ENCODE measurements at regions of chr20 and their contacts with region 1.

Region 1: GRCh38 chr20:48051794-48052474 is 266.7 kb upstream of the SULF2 start:
- DNase-seq: no peak
- H3K4me3 ChIP-seq: no peak overlapping the region
- H3K27ac ChIP-seq: peak overlapping the region; percentile 33 to 81 (median 60)
- H3K4me1 ChIP-seq: peaks cover 6 to 42% (median 7%) of the 10 kb centered on the region in 3 donors
- H3K27me3 ChIP-seq: no peaks in the 10 kb centered on the region
- CTCF ChIP-seq: no peak
- POLR2A ChIP-seq: no peak

Region 2: DNA sequence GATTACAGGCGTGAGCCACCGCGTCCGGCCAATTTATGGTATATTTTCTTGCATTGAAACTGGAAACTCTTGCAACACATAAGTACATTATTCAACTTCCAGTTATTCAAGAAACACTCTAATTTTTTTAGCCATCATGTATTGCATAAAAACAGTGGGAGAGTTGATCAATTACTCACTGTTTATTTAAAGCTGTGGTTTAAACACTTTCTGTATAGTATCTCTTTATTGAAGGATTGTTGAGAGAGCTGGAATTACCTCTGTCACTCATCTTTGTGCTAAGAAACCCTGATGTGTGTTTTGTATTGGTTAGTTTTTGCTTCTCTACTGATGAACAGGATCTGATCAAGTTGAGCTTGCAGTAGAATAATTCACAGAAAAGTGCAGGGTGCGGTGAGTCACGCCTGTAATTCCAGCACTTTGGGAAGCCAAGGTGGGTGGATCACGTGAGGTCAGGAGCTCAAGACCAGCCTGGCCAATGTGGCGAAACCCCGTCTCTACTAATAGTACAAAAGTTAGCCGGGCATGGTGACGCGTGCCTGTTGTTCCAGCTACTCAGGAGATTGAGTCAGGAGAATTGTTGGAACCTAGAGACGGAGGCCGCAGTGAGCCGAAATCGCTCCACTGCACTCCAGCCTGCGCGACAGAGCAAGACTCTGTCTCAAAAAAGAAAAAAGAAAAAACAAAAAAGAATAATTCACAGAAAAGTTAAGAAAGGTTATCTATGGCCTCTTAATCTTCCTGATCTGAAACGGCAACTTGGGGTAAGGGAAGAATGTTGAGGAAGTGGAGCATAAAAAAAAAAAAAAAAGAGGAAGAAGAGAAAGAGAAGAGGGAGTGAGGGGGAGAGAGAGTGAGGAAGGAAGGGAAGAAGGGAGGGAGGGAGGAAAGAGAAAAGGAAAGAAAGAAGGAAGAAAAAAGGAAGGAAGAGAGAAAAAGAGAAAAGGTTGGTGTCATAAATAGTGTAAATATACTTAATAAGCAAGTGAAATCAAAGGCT is 619.4 kb before region 1 on chr20:
- intact Hi-C with region 1: no loop called
- DNase-seq: no peak
- H3K4me3 ChIP-seq: no peak overlapping the region
- H3K27ac ChIP-seq: peak overlapping the region; percentile 49 to 76 (median 70)
- H3K4me1 ChIP-seq: peaks cover 4 to 39% (median 9%) of the 10 kb centered on the region in 3 donors
- H3K27me3 ChIP-seq: no peaks in the 10 kb centered on the region
- CTCF ChIP-seq: no peak
- POLR2A ChIP-seq: no peak

Region 3: GRCh38 chr20:47725248-47725973 is 326.5 kb before region 1 on chr20:
- intact Hi-C with region 1: no loop called
- DNase-seq: peak; percentile 31
- H3K4me3 ChIP-seq: no peak overlapping the region
- H3K27ac ChIP-seq: no peak overlapping the region
- H3K4me1 ChIP-seq: peaks cover 0 to 31% (median 0%) of the 10 kb centered on the region in 3 donors
- H3K27me3 ChIP-seq: no peaks in the 10 kb centered on the region
- CTCF ChIP-seq: peak; percentile 55 to 93 (median 90)
- POLR2A ChIP-seq: no peak

Region 4: DNA sequence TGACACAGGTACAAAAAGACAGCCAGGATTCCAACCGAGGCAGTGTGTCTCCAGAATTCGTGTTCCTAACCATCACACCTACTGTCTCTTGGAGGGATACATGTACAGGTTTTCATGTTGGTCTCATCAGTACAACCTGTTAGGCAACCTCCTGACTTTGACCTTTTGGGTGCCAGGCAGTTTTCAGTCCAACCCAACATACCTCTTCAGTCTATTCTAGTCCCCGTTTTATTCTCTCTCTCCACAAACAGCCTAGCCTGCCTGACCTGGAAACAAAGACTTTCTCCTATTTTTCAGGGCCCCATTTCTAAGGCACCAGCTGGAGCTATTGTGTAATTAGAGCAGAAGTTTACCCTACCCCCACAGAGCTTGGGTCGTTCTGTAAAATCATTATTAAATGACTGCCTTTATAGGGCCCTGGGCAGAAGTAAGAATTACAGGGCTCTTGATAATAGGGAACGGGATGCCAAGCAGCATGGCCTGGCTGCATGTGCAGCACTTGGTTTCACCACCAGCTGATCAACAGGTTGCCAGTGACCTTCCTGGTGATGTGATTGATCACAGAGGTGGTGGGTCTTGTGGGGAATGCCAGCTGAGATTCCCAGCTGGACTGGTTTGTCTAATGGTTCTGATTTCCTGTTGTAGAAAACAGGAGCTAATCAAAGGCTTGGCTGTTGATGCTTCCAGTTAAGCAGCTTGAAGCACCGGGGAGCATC is 61.1 kb after region 1 on chr20:
- intact Hi-C with region 1: loop called (anchors 10 kb)
- DNase-seq: no peak
- H3K4me3 ChIP-seq: no peak overlapping the region
- H3K27ac ChIP-seq: no peak overlapping the region
- H3K4me1 ChIP-seq: no peaks in the 10 kb centered on the region
- H3K27me3 ChIP-seq: no peaks in the 10 kb centered on the region
- CTCF ChIP-seq: no peak
- POLR2A ChIP-seq: no peak

Measured in esophagus squamous epithelium (tissue), 5 donors.